Heart left ventricle (tissue), 16 donors: ENCODE measurements at regions of chr13 and their contacts with region 1.

Region 1: DNA sequence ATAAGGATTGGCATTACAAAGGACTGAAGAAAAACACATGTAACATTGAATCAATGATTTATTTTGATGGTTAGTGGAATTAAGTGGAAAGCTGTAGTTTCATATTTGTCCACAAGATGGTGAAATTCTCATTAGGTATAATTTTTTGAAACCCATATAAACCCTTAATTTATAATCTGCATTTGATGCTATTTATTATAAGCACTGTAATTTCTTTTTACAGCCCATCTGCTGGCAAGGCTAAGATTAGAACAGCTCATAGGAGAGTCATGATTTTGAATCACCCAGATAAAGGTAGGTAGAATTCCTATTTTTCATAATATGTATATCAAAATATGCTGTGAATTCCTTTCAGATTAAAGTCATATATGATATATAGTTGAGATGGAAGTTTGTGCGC is 62.2 kb downstream of the DNAJC15 start:
- DNase-seq: no peak
- ATAC-seq: no peak
- H3K4me3 ChIP-seq: no peak overlapping the region
- H3K27ac ChIP-seq: no peak overlapping the region
- H3K4me1 ChIP-seq: peaks cover 0 to 22% (median 0%) of the 10 kb centered on the region in 12 donors
- H3K27me3 ChIP-seq: no peaks in the 10 kb centered on the region
- CTCF ChIP-seq: peak; percentile 59 to 75 (median 68)
- POLR2A ChIP-seq: no peak

Region 2: DNA sequence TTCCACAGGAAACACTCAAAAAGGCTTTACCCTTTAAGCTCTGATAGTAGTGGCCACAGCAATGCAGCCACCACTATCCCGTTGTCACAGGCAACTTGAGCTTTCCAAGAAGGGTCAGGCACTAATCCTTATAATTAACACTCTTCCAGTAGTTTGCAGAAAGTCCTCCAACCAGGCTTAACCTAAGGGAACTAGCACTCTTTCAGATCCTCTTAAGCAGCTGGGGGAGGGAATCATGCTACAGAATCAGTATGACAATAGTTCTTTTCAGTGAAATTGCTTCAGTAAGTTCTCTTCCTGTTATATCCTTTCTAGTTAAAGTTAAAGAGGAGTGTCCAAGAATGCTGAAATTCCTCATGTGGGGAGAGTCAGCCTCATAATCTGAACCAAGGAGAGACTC is 429.4 kb before region 1 on chr13:
- intact Hi-C with region 1: no loop called
- DNase-seq: no peak
- ATAC-seq: no peak
- H3K4me3 ChIP-seq: no peak overlapping the region
- H3K27ac ChIP-seq: no peak overlapping the region
- H3K4me1 ChIP-seq: no peaks in the 10 kb centered on the region
- H3K27me3 ChIP-seq: peaks cover 0 to 23% (median 5%) of the 10 kb centered on the region in 9 donors
- CTCF ChIP-seq: no peak
- POLR2A ChIP-seq: no peak

Region 3: GRCh38 chr13:42969558-42970172 is 115.9 kb before region 1 on chr13:
- intact Hi-C with region 1: loop called in 3 of 10 experiments (anchors 5 kb)
- DNase-seq: peak; percentile 70 to 86 (median 83)
- ATAC-seq: peak; percentile 71 to 92 (median 88)
- H3K4me3 ChIP-seq: no peak overlapping the region
- H3K27ac ChIP-seq: no peak overlapping the region
- H3K4me1 ChIP-seq: peaks cover 0 to 34% (median 10%) of the 10 kb centered on the region in 12 donors
- H3K27me3 ChIP-seq: no peaks in the 10 kb centered on the region
- CTCF ChIP-seq: peak; percentile 70 to 88 (median 82)
- POLR2A ChIP-seq: no peak